ENCODE measurements at regions of chr15 and their contacts with region 1.

Region 1: DNA sequence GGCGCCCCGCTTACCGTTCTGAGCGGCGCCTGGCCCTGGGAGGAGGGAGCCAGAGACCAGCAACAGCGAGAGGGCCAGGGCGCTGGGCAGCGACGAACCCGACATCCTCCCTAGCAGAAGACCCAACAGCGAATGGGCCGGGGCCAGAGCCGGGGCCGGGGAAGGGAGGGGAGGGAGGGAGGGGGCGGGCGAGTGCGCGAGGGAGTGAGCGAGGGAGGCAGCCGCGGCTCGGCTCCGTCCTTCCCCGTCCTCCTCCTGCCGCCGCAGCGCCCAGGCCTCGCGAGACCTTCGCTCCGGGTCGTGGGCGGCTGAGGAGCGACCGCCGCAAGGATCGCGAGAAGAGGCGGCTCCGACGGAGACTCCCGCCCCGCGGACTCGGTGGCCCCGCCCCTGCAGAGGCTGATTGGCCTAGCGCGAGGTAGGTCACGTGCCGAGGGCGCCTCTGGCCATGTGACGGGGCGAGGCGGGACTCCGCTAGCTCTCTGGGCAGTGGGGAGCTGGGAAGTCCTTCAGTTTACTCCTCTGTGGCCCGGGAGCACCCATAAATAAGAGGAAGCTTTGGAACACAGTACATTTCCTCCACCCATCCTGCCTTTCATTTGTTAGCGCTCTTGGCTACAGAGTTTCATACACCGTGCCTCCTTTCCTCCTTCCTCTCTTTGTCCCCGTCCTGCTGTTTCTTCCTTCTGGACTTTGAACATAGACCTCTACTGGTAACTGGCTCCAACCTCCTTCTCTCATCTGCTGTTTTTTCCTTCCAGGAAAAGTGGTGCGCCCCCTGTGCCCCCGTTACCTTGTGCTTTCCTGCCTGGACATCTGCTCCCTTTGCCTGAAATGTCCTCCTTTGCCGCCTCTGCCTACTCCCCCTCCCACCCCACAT is at the start of gene NPTN:
- H3K4me3 Mint-ChIP-seq: peak within 1 kb of the TSS; percentile 88
- H3K27ac Mint-ChIP-seq: peak within 1 kb of the TSS; percentile 92
- H3K4me1 Mint-ChIP-seq: peaks cover 52% of the 10 kb centered on the region
- H3K27me3 Mint-ChIP-seq: peaks cover 14% of the 10 kb centered on the region

Region 2: DNA sequence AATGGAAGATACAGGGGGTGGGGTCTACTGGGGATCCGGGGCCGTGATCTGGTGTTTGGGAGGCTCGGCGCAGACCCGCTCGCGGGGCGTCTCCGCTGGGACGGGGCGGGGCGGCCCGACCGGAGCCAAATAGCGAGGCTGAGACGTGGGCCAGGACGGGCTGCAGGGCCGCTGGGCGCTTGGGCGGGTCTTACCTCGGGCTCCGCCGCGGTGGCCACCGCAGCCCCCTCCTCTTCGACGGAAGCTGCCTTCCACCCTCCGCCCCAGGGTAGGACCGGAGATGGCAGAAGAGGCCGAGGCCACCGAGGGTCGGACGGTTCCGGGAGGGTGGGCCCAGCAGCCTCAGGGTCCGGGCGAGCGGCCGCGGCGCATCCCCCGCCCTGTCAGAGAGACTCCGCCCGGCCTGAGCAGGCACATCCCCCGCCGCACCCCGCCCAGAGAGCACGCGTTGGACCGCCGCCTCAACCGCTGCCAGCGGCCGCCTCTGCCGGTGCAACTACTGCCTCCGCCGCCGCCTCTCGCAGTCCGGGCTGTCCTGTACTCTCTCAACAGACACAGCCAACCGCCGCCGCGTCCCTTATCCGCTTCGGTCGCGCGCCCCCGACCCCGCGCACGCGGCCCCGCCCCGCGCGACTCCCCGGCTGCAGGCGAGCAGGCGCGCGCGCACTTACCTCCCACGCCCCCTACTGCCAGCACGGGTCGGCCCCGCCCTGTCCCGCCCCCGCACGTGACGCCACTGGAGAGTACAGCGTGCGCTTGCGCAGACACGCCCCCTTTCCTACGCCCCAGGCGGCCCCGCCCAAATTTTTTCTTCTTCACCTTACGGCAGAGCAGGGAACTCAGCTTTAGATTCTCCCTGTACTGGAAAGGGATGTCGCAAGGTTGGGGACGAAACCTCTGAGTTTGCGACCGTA is 1515.6 kb before region 1 on chr15 and contains the start of gene MYO9A:
- intact Hi-C with region 1: loop called (anchors 10 kb)
- H3K4me3 Mint-ChIP-seq: peak within 1 kb of the TSS; percentile 91
- H3K27ac Mint-ChIP-seq: peak within 1 kb of the TSS; percentile 99
- H3K4me1 Mint-ChIP-seq: peaks cover 38% of the 10 kb centered on the region
- H3K27me3 Mint-ChIP-seq: no peaks in the 10 kb centered on the region

Region 3: DNA sequence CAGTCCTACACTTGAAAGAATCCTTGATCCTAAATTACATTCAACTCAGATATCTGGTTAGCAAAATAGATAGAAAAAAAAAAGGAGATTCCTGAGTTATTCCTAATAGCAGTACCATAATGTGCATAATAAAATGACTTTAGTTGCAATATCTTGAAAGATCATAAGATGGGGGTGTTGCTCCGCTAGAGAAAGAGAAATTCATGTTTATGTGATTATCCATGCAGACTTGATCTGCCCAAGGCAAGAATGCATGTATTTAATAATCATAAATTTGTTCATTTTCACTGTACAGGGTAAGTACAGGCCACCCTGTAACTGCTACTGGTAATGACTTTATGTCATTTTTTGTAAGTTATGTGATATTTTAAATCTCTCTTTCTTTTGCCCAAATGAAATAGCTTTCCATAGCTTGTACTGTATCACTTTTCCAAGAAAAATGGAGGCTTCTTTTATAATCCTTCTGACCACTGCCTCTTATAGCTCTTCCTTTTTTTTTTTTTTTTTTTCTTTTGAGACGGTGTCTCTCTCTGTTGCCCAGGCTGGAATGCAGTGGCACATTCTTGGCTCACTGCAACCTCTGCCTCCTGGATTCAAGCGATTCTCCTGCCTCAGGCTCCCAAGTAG is 349.1 kb before region 1 on chr15:
- intact Hi-C with region 1: loop called (anchors 2 kb)
- H3K4me3 Mint-ChIP-seq: no peak overlapping the region
- H3K27ac Mint-ChIP-seq: no peak overlapping the region
- H3K4me1 Mint-ChIP-seq: peaks cover 33% of the 10 kb centered on the region
- H3K27me3 Mint-ChIP-seq: peaks cover 18% of the 10 kb centered on the region

Region 4: DNA sequence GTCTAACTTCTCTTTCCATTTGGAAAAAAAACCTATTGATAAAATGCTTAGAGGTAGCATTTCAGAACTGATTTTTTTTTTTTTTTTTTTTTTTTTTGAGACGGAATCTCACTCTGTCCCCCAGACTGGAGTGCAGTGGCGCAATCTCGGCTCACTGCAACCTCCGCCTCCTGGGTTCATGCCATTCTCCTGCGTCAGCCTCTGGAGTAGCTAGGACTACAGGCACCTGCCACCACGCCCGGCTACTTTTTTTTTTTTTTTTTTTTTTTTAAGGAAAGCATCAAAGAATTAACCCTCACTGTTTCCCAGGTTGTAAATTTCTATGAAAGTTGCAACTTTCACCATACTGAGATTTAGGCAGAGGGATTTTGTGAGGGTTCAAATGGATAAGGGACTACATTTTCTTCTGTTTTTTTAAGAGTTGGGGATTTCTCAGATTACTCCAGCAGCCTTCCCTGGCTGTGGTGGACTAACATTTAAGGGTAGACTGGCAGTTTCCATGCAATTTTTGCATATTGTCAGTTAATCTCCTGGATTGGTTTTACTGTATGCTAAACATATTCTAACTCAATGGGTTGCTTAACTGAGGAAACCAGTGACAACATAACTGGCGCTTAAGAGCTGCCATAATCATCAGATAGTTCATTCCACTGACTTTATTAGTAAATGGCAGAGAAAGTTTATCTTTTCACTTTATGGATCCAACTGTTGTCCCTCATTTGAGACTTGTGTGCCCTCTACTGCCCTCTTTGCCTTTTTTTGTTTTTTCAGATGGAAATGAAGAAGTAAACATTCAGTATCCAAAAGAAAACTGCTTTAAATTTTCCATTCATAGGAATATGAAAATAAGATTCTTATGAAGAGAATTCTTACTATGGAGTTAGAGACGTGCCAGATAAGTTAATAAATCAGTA is 93.9 kb before region 1 on chr15:
- intact Hi-C with region 1: no loop called
- H3K4me3 Mint-ChIP-seq: no peak overlapping the region
- H3K27ac Mint-ChIP-seq: no peak overlapping the region
- H3K4me1 Mint-ChIP-seq: peaks cover 7% of the 10 kb centered on the region
- H3K27me3 Mint-ChIP-seq: peaks cover 5% of the 10 kb centered on the region

Region 5: DNA sequence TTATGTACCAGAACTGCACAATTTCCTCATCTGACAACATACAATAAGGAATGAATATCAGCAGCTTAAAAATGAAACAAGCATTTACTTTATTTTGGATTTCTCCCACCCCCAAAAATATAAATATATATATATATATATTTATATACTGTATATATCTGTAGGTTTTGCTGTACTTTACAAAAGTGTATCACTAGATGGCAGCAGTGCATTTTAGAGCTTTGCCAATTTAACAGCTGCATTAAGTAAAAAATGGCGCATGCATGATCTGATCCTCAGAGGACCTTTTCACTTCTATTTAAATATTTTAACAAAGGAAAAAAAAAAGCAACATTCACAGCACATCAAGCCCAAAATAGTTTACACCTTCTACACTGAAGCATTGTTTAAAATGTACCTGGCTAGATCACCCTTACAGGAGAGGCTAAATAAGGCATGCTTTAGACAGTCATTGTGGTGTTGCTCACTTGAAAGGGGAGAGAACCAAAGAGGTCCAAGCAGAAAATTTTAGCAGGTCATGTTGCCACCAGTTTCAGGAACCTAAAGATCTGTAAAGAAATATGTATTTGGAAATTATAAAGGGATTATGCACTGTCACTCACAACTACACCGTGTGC is 72.7 kb before region 1 on chr15:
- intact Hi-C with region 1: loop called (anchors 1 kb)
- H3K4me3 Mint-ChIP-seq: no peak overlapping the region
- H3K27ac Mint-ChIP-seq: no peak overlapping the region
- H3K4me1 Mint-ChIP-seq: peaks cover 23% of the 10 kb centered on the region
- H3K27me3 Mint-ChIP-seq: no peaks in the 10 kb centered on the region

Region 6: GRCh38 chr15:73593304-73594074 is 39.9 kb before region 1 on chr15:
- intact Hi-C with region 1: no loop called
- H3K4me3 Mint-ChIP-seq: no peak overlapping the region
- H3K27ac Mint-ChIP-seq: no peak overlapping the region
- H3K4me1 Mint-ChIP-seq: peaks cover 60% of the 10 kb centered on the region
- H3K27me3 Mint-ChIP-seq: no peaks in the 10 kb centered on the region

Region 7: DNA sequence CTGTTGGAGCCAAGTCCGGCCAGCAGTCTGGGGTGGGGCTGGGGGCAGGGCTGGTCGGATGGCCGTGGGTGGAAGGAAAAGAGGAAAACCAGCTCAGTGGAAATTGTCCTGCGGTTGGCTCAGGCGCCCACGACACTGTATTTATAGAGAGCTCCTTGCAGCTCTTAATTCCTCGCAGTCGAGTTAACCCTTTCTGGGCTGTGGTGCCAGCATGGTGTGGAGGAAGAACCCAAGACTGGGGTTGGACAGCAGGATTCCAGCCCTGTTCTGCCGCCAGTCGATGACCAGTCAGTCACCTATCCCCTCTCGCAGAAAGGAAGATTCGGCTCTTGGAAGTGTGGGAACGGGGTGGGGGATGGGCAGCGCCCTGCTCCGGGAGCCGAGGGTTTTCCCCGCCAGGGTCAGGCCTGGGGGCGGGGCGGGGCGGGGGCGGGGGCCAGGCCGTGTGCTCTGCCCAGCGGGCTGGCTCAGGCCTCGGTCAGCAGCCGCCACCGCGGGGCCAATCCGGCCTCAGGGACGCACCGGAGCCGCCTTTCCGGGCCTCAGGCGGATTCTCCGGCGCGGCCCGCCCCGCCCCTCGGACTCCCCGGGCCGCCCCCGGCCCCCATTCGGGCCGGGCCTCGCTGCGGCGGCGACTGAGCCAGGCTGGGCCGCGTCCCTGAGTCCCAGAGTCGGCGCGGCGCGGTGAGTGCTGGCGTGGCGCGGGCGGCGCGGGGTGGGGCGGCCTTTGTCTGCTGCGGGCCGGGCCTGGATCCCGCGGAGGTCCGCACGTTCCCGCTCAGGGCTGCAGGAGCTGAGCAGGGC is 50.6 kb after region 1 on chr15 and contains the start of gene CD276:
- intact Hi-C with region 1: loop called (anchors 5 kb)
- H3K4me3 Mint-ChIP-seq: peak within 1 kb of the TSS; percentile 94
- H3K27ac Mint-ChIP-seq: peak within 1 kb of the TSS; percentile 87
- H3K4me1 Mint-ChIP-seq: peaks cover 42% of the 10 kb centered on the region
- H3K27me3 Mint-ChIP-seq: peaks cover 60% of the 10 kb centered on the region

Measured in dendritic cell treated with granulocyte-macrophage colony-stimulating factor and Interleukin-4, amounts not matched to agents 40 ng/mL and 50 ng/mL, for 4 days (primary cell).